ENCODE measurements at regions of chr1 and their contacts with region 1.

Region 1: DNA sequence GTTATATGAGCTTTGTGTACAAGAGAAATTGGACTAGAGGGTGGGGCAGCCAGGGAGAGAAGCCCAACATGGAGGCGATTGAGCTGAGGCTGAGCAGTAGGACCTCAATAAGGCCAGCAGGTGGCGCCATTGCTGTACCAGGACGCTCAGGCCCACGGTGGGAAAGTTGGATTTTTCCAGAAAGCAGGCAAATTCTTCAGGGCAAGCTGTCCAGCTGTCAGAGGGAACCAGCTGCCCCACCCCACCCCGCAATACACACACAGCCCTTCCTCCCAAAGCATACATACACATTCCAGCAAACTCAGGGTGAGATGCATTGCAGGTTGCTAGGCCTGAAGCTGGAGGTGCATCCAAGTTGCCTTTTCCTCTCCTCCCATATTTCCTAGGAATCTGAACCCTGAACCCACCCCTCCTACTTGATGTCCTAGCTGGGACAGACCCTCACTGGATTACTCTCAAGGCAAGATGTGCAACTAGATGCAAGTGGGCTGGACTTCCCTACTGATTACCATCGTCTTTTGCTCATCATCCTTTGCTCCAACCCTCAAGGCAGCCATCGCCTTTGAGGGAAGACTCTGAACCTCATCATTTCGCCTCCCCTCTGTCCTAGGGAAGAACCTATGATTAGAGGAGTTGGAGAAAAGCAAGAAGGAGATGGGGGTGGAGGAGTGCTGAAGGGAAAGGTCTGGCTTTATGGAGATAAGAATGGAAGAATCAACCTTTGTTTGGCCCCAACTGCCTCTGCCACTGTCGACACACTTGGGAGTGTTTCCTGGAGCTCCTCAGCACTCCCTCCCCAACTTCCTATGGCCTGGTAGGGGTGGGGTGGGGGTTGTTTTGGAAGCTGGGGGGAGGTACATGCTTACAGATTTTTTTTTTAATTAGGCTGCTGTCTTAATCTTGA is 25.5 kb downstream of the CD34 start:
- DNase-seq: peak; percentile 82
- CTCF ChIP-seq: peak; percentile 94

Region 2: DNA sequence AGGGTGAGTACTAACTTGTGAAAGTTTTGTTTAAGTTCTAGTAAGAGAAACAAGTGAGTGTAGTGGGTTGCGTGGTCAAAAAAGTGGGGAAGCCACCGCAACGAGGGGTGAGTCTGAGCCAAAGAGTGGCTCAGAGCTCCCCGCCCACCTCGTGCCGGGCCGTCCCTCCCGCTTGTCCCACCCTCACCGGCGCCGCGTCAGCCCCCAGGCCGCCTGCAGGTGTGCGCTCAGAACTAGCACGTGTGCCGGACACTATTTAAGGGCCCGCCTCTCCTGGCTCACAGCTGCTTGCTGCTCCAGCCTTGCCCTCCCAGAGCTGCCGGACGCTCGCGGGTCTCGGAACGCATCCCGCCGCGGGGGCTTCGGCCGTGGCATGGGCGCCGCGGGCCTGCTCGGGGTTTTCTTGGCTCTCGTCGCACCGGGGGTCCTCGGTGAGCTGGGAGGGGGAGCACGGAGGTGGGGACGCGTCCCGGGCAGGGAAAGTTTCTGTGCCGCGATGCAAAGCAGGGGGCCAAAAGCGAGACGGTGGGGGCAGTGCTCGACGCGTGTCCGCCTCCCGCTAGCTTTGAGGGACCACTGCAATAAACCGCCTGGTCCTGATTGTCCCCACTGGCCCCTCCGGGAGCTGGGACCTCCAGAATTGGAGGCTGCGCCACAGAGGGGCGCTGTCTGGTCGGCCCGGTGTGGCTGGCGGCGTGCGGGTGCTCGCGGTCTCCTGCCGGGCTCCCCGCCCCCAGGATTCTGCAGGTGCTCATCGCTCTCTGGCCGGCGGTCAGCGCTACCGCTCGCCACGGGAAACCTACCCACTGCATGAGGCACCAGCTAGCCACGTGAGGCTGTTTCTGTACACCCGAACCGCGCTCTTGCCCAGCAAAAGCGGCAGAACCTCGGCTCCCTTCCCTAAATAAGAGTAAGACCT is 431.1 kb before region 1 on chr1 and contains the start of gene CR2:
- CTCF ChIA-PET with region 1: no interaction called
- POLR2A ChIA-PET with region 1: no interaction called
- DNase-seq: peak; percentile 83
- CTCF ChIP-seq: peak; percentile 56

Region 3: GRCh38 chr1:207787776-207788175 is 97.6 kb before region 1 on chr1:
- CTCF ChIA-PET with region 1: no interaction called
- POLR2A ChIA-PET with region 1: no interaction called
- DNase-seq: no peak
- CTCF ChIP-seq: no peak

Region 4: DNA sequence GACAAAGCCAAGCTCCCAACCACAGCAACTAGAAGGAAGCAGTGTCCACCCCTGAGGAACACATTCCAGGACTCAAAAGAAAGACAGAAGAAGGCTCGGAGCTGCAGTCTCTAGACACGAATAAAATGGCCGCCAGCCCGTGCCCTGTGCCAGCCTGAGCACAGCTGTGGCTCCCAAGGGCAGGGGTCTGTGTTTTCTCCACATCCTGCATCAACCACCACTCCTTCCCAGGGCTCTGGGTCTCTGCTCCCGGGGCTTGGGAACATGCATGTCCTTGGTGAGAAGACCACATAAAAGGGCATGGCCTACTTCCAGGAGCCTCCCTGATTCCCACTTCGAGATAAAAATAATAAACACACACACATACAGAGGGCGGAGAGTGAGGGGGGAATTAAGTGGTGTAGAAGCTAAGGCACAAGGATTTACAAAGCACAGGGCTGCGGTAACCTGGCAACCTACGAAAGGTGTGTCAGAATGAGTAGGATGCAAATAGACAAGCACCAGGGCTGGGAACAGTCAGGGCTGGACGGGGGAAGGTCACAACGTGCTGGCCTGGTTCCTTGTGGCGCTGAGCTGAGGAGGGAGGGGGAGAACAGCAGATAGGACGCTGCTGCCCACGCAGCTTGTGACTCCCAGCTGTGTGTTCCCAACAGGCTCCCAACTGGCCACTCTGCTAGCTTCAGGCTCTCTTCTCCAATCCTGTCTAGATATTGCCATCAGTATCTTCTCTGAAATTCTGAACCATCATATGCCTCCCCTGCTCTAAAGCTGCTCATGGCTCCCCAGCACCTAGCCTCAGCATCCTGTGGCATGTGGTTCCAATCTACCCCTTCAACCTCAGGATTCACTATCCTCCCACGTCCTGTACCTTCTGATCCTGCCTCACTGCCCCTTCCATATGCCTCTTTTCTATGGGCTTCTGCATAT is 47.0 kb before region 1 on chr1:
- CTCF ChIA-PET with region 1: interaction called, 16 read pairs
- POLR2A ChIA-PET with region 1: no interaction called
- DNase-seq: no peak
- CTCF ChIP-seq: no peak

Region 5: DNA sequence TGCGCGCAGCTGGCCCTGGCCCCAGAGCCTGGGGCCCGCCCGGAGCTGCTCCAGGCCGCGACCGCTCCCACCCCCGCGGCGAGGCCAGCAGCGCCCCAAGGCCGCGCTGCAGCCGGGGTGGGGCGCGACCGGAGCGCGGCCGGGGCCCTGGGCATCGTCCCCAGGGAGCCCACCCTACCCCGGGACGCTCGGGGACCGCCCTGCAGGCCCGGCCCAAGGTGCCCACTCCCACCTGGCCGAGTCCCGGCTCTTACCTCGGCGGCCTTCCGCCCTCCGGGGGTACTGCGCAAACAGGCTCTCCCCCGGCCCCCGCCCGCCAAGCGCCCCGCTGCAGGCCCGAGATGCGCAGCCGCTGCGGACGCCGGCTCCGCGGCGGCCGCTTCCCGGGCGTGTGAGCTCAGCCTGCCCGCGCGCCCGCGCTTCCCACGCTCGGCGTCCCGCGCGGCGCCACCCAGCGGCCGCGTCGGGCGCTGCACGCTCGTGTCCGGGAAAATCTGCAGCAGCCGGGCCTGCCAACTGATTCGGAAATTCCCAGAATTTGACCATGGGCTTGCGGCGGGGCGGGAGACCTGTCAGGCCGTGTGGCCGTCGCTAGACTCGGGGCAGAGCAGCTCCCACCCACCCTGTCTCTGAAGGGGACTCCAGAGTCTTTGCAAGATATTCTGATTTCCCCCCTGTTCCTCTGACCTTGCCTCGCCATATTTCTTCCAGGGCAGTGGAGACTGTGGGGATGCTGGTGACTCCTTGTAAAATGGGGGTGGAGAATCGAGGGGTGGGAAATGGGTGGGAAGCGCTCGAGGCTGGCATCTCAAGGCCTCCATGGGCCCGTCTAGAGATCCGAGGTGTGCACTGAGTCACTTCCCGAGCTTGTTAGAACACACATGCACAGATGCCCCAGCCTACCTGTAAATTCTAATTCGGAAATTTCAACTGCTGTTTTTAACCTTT is 16.3 kb before region 1 on chr1:
- CTCF ChIA-PET with region 1: interaction called, 319 read pairs
- POLR2A ChIA-PET with region 1: interaction called, 3 read pairs
- DNase-seq: peak; percentile 89
- CTCF ChIP-seq: peak; percentile 95

Region 6: DNA sequence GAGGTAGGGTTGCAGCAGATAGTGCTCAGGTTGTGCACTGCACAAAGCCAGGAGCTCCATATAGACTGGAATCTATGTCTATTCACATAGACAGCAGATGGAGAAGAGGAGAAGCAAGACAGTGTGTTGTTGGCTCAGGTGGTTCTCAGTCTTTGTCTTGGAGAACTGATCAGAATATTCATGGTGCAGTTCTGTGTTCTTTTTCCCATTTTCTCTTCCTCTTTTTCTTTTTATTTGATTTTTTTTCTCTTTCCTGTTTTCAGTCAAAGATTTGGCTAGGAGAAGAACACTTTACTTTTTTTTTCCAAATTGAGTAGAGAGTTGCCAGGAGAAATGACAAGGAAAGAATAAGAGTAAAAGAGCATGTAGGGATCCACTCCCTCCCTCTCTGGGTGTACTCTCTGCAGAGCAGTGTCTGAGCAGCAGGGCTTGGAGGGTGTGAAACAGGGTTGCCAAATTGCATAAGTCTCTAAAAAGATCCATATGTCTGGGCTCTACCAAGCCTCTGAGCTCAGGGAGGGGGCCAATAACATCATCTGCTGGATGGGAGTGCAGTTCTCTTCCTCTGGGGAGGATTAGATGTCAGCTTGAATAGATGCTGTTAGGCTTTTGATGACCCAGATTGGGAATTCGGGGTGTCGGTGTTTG is 34.3 kb after region 1 on chr1:
- CTCF ChIA-PET with region 1: interaction called, 25 read pairs
- POLR2A ChIA-PET with region 1: no interaction called
- DNase-seq: no peak
- CTCF ChIP-seq: no peak

Region 7: GRCh38 chr1:207963427-207964194 is 78.2 kb after region 1 on chr1:
- CTCF ChIA-PET with region 1: interaction called, 222 read pairs
- POLR2A ChIA-PET with region 1: no interaction called
- DNase-seq: peak; percentile 97
- CTCF ChIP-seq: peak; percentile 98

Region 8: DNA sequence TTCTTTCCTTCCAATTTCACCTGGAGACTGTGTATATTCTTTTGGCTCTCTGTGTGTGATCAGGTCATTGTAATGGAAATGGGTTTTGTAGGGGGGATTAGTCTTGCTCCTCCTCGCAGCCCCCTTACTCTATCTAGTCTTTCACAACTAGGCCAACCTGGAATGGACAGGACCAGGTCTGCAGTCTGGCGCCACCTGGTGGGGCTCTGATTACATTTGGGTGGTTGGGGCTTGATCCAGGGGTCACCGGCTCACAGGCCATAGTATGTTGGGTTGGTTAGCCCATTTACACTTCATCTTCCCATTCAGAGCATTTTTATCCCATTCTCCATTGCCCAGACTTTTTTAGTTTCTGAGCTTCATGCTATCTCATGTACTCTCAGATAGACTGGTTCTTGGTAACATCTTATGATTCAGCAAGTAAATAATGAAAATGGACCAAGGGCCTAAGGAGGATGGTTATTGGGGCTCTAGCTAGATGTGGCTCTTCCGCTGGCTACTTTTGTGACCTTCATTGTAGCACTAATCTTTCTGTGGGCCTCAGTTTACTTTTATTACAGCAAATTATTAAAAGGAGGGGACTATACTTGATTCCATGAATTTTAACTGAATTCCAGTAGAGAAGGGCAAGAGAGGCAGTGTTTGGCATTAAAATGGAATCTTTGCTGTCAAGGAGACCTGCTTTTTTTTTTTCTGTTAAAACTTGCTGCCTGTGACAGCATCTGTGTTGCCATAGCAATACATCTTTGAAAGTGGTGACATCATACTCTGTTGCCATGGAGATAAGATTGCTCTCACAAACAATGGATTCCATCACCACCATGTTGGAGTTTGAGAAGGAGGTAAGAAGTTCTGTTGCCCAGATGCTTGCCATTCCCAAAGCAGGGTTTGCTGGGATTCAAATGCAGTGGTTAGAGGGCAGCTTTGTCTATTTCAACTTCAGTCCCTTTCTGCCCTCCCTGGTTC is 208.7 kb after region 1 on chr1:
- CTCF ChIA-PET with region 1: interaction called, 18 read pairs
- POLR2A ChIA-PET with region 1: no interaction called
- DNase-seq: peak; percentile 72
- CTCF ChIP-seq: peak; percentile 84

Region 9: GRCh38 chr1:208211921-208212843 is 326.8 kb after region 1 on chr1:
- CTCF ChIA-PET with region 1: no interaction called
- POLR2A ChIA-PET with region 1: no interaction called
- DNase-seq: no peak
- CTCF ChIP-seq: no peak